ENCODE measurements at regions of chr6 and their contacts with region 1.

Region 1: DNA sequence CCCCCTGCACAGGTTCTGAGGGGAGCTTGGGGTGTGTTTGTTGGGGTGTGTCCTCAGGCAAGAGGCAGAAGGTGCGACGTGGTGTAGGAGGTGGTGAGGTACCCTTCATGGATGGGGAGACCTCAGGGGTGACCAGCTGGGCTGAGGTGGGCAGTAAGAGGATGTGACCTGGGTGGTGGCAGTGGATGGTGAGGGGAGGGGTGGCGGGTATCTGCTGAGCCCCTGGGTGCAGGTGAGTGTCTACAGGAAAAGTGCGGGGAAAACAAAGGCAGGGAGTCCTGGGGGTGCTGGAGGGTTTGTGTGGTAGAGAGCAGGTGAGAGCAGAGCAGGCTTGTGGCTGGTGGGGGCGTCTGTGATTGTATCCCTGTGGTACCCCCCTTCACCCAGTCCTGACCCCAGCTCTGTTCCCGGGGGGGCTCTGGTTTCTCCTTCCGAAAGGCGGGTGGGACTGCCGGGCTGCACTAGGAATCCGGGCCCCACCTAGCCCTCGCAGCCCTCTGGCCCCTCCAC is 631 bp downstream of the RAET1L start:
- DNase-seq: no peak
- CTCF ChIP-seq: no peak

Region 2: GRCh38 chr6:149922642-149923326 is 101.9 kb before region 1 on chr6 and contains the start of gene RAET1G:
- in situ Hi-C with region 1: loop called (anchors 5 kb)
- DNase-seq: peak; percentile 75
- CTCF ChIP-seq: no peak

Region 3: DNA sequence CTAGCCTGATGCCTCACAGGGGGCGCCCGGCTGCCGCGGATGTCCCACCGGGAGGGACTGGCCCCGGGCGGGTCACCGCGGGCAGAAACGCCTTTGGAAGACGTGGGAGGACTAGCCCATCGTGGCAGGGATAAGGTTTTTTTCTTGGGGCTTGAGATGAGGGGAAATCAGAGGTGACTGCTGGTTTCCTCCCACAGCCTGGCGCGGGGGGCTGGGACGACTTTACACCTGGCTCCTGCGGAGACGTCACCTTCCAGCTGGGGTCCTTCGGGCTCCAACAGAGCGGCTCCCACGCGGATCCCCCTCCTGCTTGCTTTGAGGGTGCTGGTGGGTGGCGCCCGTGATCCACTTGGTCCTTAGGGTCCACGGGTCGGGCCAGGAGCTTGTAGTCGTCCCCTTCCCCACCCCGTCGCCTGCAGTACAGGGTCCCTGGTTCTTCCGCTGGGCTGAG is 32.8 kb after region 1 on chr6:
- in situ Hi-C with region 1: no loop called
- DNase-seq: no peak
- CTCF ChIP-seq: no peak

Region 4: GRCh38 chr6:150514599-150515401 is 490.1 kb after region 1 on chr6:
- in situ Hi-C with region 1: no loop called
- DNase-seq: no peak
- CTCF ChIP-seq: no peak

Measured in GM13977 (cell line).